Activated CD4-positive, alpha-beta memory T cell treated with anti-CD3 and anti-CD28 coated beads, Interleukin-2, amount 10 ng/mL, durations not matched to agents 7 days and 5 days (primary cell): ENCODE measurements at regions of chr1 and their contacts with region 1.

Region 1: GRCh38 chr1:44213222-44214112 is at the start of gene DMAP1:
- DNase-seq: peak; percentile 88
- H3K4me3 Mint-ChIP-seq: peak within 1 kb of the TSS; percentile 96
- H3K27ac Mint-ChIP-seq: peak within 1 kb of the TSS; percentile 90
- H3K4me1 Mint-ChIP-seq: peaks cover 36% of the 10 kb centered on the region
- H3K27me3 Mint-ChIP-seq: no peaks in the 10 kb centered on the region
- total RNA-seq, gene DMAP1: 39.6 to 40.2 TPM

Region 2: GRCh38 chr1:44112486-44112885 is 101.0 kb before region 1 on chr1:
- CTCF ChIA-PET with region 1: no interaction called
- POLR2A ChIA-PET with region 1: no interaction called
- DNase-seq: no peak
- H3K4me3 Mint-ChIP-seq: no peak overlapping the region
- H3K27ac Mint-ChIP-seq: no peak overlapping the region
- H3K4me1 Mint-ChIP-seq: no peaks in the 10 kb centered on the region
- H3K27me3 Mint-ChIP-seq: peaks cover 16% of the 10 kb centered on the region

Region 3: DNA sequence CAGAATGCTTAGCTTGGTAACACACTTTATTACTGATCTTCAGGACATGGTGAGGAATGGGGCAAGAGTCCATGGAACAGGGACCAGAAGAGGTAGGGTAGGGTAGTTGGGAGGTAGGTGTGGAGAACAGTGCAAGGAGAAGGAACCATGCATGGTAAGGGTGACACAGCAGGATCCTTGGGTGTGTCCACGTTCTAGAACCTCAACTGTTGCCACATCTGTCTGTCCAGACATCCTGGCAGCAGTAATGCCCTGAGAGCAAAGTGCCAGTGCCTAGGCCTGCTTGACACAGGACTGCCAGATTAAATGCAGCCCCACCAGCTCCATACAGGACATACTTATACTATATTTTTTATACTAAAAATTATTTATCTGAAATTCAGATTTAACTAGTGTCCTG is 13.7 kb after region 1 on chr1:
- CTCF ChIA-PET with region 1: interaction called, 10 read pairs
- POLR2A ChIA-PET with region 1: interaction called, 6 read pairs
- DNase-seq: no peak
- H3K4me3 Mint-ChIP-seq: no peak overlapping the region
- H3K27ac Mint-ChIP-seq: no peak overlapping the region
- H3K4me1 Mint-ChIP-seq: peaks cover 1% of the 10 kb centered on the region
- H3K27me3 Mint-ChIP-seq: no peaks in the 10 kb centered on the region

Region 4: DNA sequence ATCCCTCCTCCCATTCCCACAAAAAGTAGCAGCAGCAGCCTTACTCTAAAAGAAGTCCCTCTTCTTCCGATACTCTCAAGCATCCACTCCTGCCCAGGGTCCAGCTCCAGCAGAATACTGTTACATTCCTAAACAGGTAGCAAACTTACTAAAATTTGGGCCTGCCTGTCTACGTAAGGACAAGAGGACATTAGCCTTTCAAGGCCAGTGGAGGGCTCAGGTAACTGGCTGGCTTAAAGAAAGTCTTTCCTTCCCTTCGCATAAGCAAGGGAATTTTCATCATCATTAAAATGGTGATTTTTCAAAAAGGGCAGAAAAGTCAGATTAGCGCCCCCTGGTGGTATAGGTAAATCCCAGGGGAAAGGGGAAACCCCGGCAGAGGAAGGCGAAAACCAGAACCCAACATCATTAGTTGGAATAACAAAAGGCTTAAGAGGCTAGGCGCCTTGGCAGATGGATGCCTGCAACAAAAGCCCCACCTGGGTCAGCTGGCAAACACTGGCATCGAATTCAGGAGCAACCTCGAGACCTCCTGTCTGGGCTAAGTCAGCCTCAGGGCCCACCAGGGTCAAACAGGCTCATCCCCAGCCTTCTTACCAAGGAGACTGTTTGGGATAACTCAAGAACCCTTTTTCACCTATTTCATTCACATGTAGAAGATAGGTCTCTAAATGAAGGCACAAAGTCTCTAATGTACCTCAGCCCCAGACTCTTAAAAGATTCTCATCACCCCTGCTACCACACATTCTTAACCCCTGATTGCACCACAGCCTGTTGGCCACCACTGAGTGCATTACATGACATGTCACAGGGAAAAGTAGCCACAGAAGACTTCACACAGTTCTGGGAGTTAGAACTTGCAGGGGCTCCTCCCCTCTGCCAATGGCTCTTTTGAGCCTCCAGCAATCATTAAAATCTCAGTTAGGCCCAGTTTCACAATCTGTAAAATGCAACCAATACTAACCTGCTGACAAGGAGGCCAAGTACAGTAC is 104.9 kb after region 1 on chr1:
- CTCF ChIA-PET with region 1: interaction called, 11 read pairs
- POLR2A ChIA-PET with region 1: interaction called, 4 read pairs
- DNase-seq: peak; percentile 38
- H3K4me3 Mint-ChIP-seq: no peak overlapping the region
- H3K27ac Mint-ChIP-seq: no peak overlapping the region
- H3K4me1 Mint-ChIP-seq: peaks cover 8% of the 10 kb centered on the region
- H3K27me3 Mint-ChIP-seq: no peaks in the 10 kb centered on the region

Region 5: DNA sequence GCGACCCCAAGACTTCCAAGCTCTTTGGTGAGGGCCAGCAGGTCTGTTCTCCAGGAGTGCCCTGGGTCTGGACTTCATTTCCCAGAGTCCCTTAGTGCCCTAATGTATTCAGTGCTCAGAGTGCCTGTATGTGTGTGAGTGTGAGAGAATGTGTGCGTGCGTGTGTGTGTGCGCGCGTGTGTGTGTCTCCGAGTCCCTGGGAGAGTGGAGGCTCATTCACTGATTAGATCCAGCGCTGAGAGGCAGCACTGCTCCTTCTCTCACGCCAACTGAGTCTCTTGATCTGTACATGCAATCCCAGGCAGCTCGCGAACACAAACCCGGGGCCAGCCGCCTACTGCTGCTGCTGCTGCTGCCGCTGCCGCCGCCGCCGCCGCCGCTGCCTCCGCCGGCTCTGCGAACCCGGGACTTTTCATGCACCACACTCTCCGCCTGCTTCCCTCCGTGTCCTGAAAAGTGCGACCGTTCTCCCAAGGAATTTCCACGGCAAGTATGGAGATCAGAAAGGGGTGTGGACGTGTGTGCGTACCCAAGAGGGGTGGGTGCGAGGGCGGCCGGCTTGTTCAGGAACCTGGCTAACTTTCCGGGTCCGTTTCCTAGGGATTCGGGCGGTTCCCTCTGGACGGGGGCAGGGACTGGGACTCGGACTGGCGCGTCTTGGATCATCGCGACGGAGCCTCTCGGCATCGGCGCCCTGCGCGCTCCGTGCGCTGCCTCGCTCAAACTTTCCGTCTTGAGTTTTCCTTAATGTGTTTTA is 191.8 kb after region 1 on chr1 and contains the start of gene RNF220:
- CTCF ChIA-PET with region 1: no interaction called
- POLR2A ChIA-PET with region 1: no interaction called
- DNase-seq: peak; percentile 38
- H3K4me3 Mint-ChIP-seq: peak within 1 kb of the TSS; percentile 56
- H3K27ac Mint-ChIP-seq: no peak within 1 kb of the TSS
- H3K4me1 Mint-ChIP-seq: peaks cover 33% of the 10 kb centered on the region
- H3K27me3 Mint-ChIP-seq: peaks cover 64% of the 10 kb centered on the region
- total RNA-seq, gene RNF220: 69.0 to 70.7 TPM